Posterior vena cava (tissue), 2 donors: ENCODE measurements at regions of chr2 and their contacts with region 1.

Region 1: GRCh38 chr2:70086838-70087701 is at the start of gene PCBP1:
- DNase-seq: peak; percentile 99
- total RNA-seq, gene PCBP1: 238 to 269 TPM

Region 2: GRCh38 chr2:69914170-69914960 is 172.7 kb before region 1 on chr2:
- intact Hi-C with region 1: loop called in 1 of 2 experiments (anchors 10 kb)
- DNase-seq: peak; percentile 99

Region 3: GRCh38 chr2:70103531-70104061 is 16.5 kb after region 1 on chr2:
- intact Hi-C with region 1: no loop called
- DNase-seq: no peak

Region 4: GRCh38 chr2:70124983-70125480 is 38.0 kb after region 1 on chr2:
- intact Hi-C with region 1: loop called (anchors 5 kb)
- DNase-seq: peak; percentile 90

Region 5: GRCh38 chr2:70142590-70143313 is 55.7 kb after region 1 on chr2:
- intact Hi-C with region 1: loop called in 1 of 2 experiments (anchors 1 kb)
- DNase-seq: peak; percentile 100